H1 (cell line): ENCODE measurements at regions of chr1 and their contacts with region 1.

Region 1: GRCh38 chr1:25695090-25695770 is 78.6 kb downstream of the MAN1C1 start:
- DNase-seq: no peak
- H3K4me3 ChIP-seq: no peak overlapping the region
- H3K27ac ChIP-seq: no peak overlapping the region
- H3K4me1 ChIP-seq: peaks cover 12 to 24% (median 17%) of the 10 kb centered on the region in 4 experiments
- H3K27me3 ChIP-seq: no peaks in the 10 kb centered on the region
- CTCF ChIP-seq: peak; percentile 2 to 28 (median 26); a peak in 3 of 4 replicates
- EP300 ChIP-seq: no peak
- POLR2A ChIP-seq: no peak
- RAD21 ChIP-seq: peak; percentile 34 to 40; a peak in 3 of 4 replicates

Region 2: DNA sequence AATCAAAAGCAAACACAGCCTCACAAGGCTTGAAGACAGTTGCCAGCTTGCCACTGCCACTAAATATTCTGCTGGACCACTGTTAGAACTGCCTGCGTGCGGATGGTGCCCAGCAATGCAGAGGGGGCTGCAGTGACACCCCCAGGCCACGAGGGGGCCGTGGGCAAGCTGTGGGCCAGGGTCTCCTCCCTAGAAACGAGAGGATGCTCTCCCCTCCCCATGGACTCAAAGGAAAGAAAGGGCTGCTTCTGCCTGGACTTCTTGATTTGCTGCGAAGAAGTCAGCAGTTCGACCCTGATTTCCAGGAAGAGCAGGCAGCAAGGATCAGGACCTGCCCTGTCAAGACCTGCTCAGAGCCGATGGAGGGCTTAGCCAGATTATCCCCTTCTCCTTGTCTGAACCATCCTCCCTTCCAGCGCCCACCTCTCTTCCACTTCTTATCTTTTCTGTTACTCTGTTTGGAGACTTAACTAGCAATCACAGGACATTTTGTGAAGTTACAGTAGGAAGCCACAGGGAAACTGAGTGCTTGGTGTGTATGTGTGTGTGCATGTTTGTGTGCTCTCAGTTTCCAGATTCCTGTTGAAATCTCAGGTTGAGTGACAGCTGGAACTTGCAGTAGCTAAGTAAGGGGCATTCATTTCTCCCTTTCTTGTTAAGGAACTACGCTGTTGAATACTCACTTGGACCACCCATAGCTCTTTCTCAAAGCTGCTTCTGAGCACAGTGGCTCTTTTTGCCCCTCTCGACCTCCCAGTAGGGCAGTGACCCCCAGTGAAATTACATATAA is 75.9 kb before region 1 on chr1:
- CTCF ChIA-PET with region 1: interaction called, 53 read pairs
- POLR2A ChIA-PET with region 1: interaction called, 3 read pairs
- DNase-seq: peak; percentile 41 to 87
- H3K4me3 ChIP-seq: no peak overlapping the region
- H3K27ac ChIP-seq: no peak overlapping the region
- H3K4me1 ChIP-seq: peaks cover 0 to 25% (median 6%) of the 10 kb centered on the region in 4 experiments; a peak in 6 of 7 replicates
- H3K27me3 ChIP-seq: peaks cover 9 to 29% (median 17%) of the 10 kb centered on the region in 4 experiments
- CTCF ChIP-seq: peak; percentile 94 to 99 (median 99)
- EP300 ChIP-seq: no peak
- POLR2A ChIP-seq: no peak
- RAD21 ChIP-seq: peak; percentile 83 to 87

Region 3: DNA sequence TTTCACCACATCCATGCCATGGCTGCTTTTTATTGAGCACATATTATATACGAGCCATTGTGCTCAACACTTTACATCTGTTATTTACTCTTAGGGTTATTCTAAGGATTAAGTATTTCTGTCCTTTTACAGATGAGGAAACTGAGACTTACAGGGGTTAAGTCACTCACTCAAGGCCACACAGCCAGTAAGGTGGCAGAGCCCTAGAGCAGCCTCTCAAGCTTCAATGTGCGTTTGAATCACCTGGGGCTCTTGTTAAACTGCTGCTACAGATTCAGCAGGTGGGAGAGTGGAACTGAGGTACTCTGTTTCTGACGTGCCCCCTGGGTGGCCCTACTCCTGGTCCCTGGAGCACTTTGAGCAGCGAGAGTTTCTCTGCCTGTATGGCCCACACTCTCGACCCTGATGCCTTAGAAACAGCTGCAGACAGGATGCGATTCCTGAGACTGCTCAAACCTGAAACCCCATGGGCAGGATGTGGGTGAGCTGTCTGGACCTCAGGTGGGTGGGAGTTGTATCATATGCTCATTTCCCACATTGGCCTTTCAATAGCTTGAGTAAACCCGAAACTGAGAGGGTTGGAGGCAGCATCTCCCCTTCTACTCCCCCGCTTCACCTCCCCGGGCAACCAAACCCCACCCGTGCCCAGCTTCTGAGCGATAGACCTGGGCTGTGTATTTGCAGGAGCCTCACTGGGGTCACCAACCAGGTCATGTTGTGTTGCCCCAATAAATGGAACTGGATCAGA is 19.3 kb before region 1 on chr1:
- CTCF ChIA-PET with region 1: interaction called, 36 read pairs
- POLR2A ChIA-PET with region 1: no interaction called
- DNase-seq: no peak
- H3K4me3 ChIP-seq: no peak overlapping the region
- H3K27ac ChIP-seq: no peak overlapping the region
- H3K4me1 ChIP-seq: peaks cover 1 to 10% (median 4%) of the 10 kb centered on the region in 4 experiments; a peak in 5 of 7 replicates
- H3K27me3 ChIP-seq: no peaks in the 10 kb centered on the region
- CTCF ChIP-seq: no peak
- EP300 ChIP-seq: no peak
- POLR2A ChIP-seq: no peak
- RAD21 ChIP-seq: no peak

Region 4: DNA sequence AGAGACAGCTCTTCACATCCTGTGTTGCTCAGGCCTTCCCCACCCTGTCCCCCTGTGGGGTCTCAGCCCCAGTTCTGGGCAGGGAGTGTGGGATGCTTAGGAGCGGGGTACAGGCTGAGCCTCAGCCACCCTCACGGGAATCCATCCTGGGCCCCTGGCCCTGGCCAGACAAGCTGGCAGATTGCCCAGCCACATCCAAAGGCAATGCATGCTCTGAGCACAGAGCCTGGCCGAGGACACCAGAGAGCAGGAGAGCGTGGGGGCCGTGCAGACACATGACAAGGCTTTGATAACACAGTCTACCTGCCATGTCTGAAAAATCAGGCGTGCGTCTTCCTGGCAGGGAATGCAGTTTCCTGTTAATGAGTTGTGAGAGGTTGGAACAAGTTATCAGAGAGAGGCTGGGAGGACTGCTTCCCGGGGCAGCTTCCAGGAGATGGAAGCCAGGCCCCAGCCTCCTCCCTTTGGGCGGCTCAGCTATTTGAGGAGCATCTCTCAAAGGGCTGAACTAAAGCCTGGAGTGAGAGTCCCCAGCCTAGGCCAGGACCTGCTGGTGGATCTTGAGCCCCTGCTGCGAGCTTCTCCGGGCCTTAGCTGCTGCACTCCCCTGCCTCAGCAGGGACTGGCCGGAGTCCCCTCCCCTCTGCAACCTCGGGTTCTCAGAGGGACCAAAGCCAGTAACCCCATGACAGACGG is 32.6 kb after region 1 on chr1:
- CTCF ChIA-PET with region 1: interaction called, 53 read pairs
- POLR2A ChIA-PET with region 1: no interaction called
- DNase-seq: peak in 1 of 2 experiments; percentile 50
- H3K4me3 ChIP-seq: no peak overlapping the region
- H3K27ac ChIP-seq: no peak overlapping the region
- H3K4me1 ChIP-seq: peaks cover 9 to 25% (median 17%) of the 10 kb centered on the region in 4 experiments
- H3K27me3 ChIP-seq: no peaks in the 10 kb centered on the region
- CTCF ChIP-seq: no peak
- EP300 ChIP-seq: no peak
- POLR2A ChIP-seq: no peak
- RAD21 ChIP-seq: no peak

Region 5: GRCh38 chr1:25758466-25759077 is 63.3 kb after region 1 on chr1:
- CTCF ChIA-PET with region 1: interaction called, 13 read pairs
- POLR2A ChIA-PET with region 1: no interaction called
- DNase-seq: no peak
- H3K4me3 ChIP-seq: no peak overlapping the region
- H3K27ac ChIP-seq: no peak overlapping the region
- H3K4me1 ChIP-seq: peaks cover 0 to 16% (median 7%) of the 10 kb centered on the region in 4 experiments; a peak in 5 of 7 replicates
- H3K27me3 ChIP-seq: no peaks in the 10 kb centered on the region
- CTCF ChIP-seq: peak in 1 of 3 experiments; percentile 24; a peak in 1 of 4 replicates
- EP300 ChIP-seq: no peak
- POLR2A ChIP-seq: no peak
- RAD21 ChIP-seq: no peak; a peak in 1 of 4 replicates

Region 6: GRCh38 chr1:25810341-25811299 is 115.4 kb after region 1 on chr1:
- CTCF ChIA-PET with region 1: interaction called, 23 read pairs
- POLR2A ChIA-PET with region 1: no interaction called
- DNase-seq: peak; percentile 59 to 100
- H3K4me3 ChIP-seq: no peak overlapping the region
- H3K27ac ChIP-seq: no peak overlapping the region
- H3K4me1 ChIP-seq: peaks cover 0 to 5% (median under 1%) of the 10 kb centered on the region in 4 experiments; a peak in 2 of 7 replicates
- H3K27me3 ChIP-seq: no peaks in the 10 kb centered on the region
- CTCF ChIP-seq: peak; percentile 98 to 100 (median 99)
- EP300 ChIP-seq: no peak
- POLR2A ChIP-seq: no peak
- RAD21 ChIP-seq: peak; percentile 99 to 100

Region 7: GRCh38 chr1:25848531-25848930 is 153.3 kb after region 1 on chr1:
- CTCF ChIA-PET with region 1: no interaction called
- POLR2A ChIA-PET with region 1: no interaction called
- DNase-seq: no peak
- H3K4me3 ChIP-seq: no peak overlapping the region
- H3K27ac ChIP-seq: no peak overlapping the region
- H3K4me1 ChIP-seq: peaks cover 0 to 3% (median under 1%) of the 10 kb centered on the region in 4 experiments; a peak in 2 of 7 replicates
- H3K27me3 ChIP-seq: no peaks in the 10 kb centered on the region
- CTCF ChIP-seq: no peak
- EP300 ChIP-seq: no peak
- POLR2A ChIP-seq: no peak
- RAD21 ChIP-seq: no peak

Region 8: DNA sequence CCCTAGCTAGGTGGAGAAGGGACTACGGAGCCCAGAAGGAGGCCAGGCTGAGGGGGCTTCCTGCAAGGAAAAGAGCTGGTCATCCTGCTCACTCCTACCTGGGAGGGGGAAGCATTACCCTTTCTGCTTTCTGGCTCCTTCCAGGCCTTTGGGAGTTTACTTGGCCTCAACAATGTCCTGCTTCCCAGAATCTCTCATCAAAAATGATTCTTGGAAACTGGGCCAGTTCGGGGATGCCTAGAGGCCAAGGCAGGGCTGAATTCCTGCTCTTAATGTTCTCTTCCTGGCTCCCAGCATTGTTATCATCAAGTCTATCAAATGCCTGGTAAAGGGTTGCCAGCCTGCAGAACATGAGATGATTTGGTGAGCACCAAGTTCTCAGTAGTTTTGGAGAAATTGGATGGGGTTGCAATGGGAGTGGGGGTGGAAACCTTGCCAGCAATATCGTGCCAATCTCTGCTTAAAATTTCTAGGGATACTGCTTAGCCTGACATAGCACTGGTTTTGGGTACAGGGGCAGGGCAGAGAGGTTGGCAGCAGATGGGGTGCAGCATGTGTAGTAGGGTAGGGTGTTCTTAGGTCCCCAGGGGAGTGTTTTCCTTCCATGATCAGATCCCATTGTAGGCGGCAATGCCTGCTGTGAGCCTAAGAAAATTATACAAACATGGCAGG is 310.3 kb after region 1 on chr1:
- CTCF ChIA-PET with region 1: no interaction called
- POLR2A ChIA-PET with region 1: no interaction called
- DNase-seq: no peak
- H3K4me3 ChIP-seq: no peak overlapping the region
- H3K27ac ChIP-seq: no peak overlapping the region
- H3K4me1 ChIP-seq: peaks cover 0 to under 1% (median under 1%) of the 10 kb centered on the region in 4 experiments; a peak in 6 of 7 replicates
- H3K27me3 ChIP-seq: no peaks in the 10 kb centered on the region
- CTCF ChIP-seq: no peak
- EP300 ChIP-seq: no peak
- POLR2A ChIP-seq: no peak
- RAD21 ChIP-seq: no peak

Region 9: DNA sequence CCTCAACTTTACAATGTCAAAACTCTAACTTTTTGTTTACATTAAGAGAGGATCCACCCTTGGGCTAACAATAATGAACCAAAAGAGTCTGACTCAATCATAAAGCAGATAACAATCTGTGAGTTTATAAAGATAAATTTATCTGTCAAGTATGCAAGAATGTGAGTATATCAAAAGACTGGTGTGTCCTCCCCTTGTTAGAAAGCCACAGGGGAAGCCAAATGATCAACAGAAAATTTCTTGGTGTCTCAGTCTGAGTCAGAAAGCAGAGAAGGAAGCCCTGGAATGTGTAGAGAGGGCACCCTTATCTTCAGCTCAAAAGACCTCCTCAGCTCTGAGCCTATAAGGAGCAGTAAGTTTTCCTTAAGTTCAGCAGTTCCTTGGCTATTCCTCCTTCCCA is 402.5 kb after region 1 on chr1:
- CTCF ChIA-PET with region 1: no interaction called
- POLR2A ChIA-PET with region 1: no interaction called
- DNase-seq: no peak
- H3K4me3 ChIP-seq: no peak overlapping the region
- H3K27ac ChIP-seq: no peak overlapping the region
- H3K4me1 ChIP-seq: peaks cover 9 to 15% (median 12%) of the 10 kb centered on the region in 4 experiments
- H3K27me3 ChIP-seq: peaks cover 0 to 5% (median 2%) of the 10 kb centered on the region in 4 experiments; a peak in 3 of 7 replicates
- CTCF ChIP-seq: no peak
- EP300 ChIP-seq: no peak
- POLR2A ChIP-seq: no peak
- RAD21 ChIP-seq: no peak